Left cardiac atrium (tissue), 4 donors: ENCODE measurements at regions of chr3 and their contacts with region 1.

Region 1: GRCh38 chr3:140972833-140973232 is 31.2 kb downstream of the SLC25A36 start:
- DNase-seq: no peak
- ATAC-seq: no peak

Region 2: GRCh38 chr3:140898340-140899180 is 74.3 kb before region 1 on chr3:
- intact Hi-C with region 1: loop called in 1 of 2 experiments (anchors 5 kb)
- DNase-seq: no peak
- ATAC-seq: peak in 1 of 2 donors; percentile 44

Region 3: GRCh38 chr3:140922634-140923033 is 50.2 kb before region 1 on chr3:
- intact Hi-C with region 1: loop called in 1 of 2 experiments (anchors 5 kb)
- DNase-seq: no peak
- ATAC-seq: peak in 1 of 2 donors; percentile 10

Region 4: DNA sequence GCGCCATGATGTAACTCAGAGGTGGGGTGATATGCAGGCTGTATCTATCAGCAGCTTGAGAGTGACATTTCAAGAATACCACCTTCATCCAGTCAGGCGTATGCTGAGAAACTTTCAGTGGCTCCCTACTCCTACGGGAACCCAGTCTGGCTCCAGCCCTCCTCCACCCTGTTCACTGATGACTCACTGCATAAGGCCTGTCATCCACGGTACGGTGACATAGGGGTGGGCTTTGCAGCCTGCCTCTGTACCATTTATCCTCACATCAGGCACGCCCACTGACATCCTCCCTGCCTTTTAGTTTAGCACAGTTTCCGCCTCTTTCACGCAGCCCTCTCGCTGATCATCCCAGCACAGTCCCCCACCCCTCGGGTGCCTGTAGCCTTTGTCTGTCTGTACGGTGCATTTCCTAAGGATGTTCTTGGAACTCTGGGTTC is 270.5 kb after region 1 on chr3:
- intact Hi-C with region 1: no loop called
- DNase-seq: no peak
- ATAC-seq: peak in 1 of 2 donors; percentile 65